Activated CD8-positive, alpha-beta memory T cell treated with anti-CD3 and anti-CD28 coated beads, Interleukin-2, amount 10 ng/mL, durations not matched to agents 7 days and 5 days (primary cell): ENCODE measurements at regions of chr16 and their contacts with region 1.

Region 1: GRCh38 chr16:57316390-57317017 is 32.0 kb upstream of the PLLP start:
- DNase-seq: no peak
- ATAC-seq: no peak
- H3K4me3 Mint-ChIP-seq: no peak overlapping the region
- H3K27ac Mint-ChIP-seq: no peak overlapping the region
- H3K4me1 Mint-ChIP-seq: peaks cover 17% of the 10 kb centered on the region
- H3K27me3 Mint-ChIP-seq: peaks cover 4% of the 10 kb centered on the region

Region 2: DNA sequence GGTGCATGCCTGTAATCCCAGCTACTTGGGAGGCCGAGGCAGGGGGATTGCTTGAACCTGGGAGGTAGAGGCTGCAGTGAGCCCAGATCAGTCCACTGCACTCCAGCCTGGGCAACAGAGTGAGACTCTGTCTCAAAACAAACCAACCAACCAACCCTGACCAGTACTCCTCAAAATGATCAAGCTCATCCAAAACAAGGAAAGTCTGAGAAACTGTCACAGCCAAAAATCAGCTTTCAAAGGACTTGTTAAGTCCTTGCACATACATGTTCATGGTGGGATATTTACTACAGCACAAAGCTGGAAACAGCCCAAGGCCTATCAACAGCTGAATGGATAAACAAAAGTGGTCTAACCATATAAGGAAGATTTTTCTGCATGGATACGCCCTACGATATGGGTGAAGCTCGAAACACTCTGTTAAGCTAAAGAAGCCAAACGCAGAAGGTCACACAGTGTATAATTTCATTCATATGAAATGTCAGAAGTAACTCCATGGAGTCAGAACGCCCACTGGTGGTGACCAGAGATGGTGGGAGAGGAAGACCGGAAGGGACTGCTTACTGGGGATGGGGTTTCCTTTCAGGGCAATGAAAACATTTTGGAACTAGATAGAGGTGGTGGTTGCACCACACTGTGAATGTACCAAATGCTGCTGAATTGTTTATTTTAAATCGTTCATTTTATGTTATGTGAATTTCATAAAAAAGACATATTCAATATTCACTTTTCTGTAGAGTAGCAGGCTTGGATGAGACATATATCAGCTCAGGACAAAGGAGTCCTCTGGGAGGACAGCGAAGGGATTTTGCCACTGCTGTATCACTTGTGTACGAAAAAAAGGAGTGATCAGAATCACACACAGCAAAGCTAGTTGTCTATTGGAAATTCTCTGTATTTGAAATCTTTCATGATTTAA is 105.8 kb after region 1 on chr16:
- CTCF ChIA-PET with region 1: interaction called, 14 read pairs
- DNase-seq: no peak
- ATAC-seq: no peak
- H3K4me3 Mint-ChIP-seq: no peak overlapping the region
- H3K27ac Mint-ChIP-seq: no peak overlapping the region
- H3K4me1 Mint-ChIP-seq: peaks cover 14% of the 10 kb centered on the region
- H3K27me3 Mint-ChIP-seq: no peaks in the 10 kb centered on the region